ENCODE measurements at regions of chr3 and their contacts with region 1.

Region 1: GRCh38 chr3:177426878-177427495 is 229.7 kb upstream of the TBL1XR1 start:
- DNase-seq: peak; percentile 65
- H3K4me3 Mint-ChIP-seq: peak overlapping the region; percentile 20
- H3K27ac Mint-ChIP-seq: peak overlapping the region; percentile 59
- H3K4me1 Mint-ChIP-seq: peaks cover 29% of the 10 kb centered on the region
- H3K27me3 Mint-ChIP-seq: peaks cover 16% of the 10 kb centered on the region

Region 2: GRCh38 chr3:177057768-177058167 is 369.2 kb before region 1 on chr3:
- intact Hi-C with region 1: loop called (anchors 1 kb)
- DNase-seq: peak; percentile 10
- H3K4me3 Mint-ChIP-seq: no peak overlapping the region
- H3K27ac Mint-ChIP-seq: no peak overlapping the region
- H3K4me1 Mint-ChIP-seq: peaks cover 7% of the 10 kb centered on the region
- H3K27me3 Mint-ChIP-seq: no peaks in the 10 kb centered on the region

Region 3: GRCh38 chr3:177314897-177315296 is 112.1 kb before region 1 on chr3:
- intact Hi-C with region 1: loop called (anchors 1 kb)
- DNase-seq: no peak
- H3K4me3 Mint-ChIP-seq: no peak overlapping the region
- H3K27ac Mint-ChIP-seq: no peak overlapping the region
- H3K4me1 Mint-ChIP-seq: peaks cover 15% of the 10 kb centered on the region
- H3K27me3 Mint-ChIP-seq: peaks cover 3% of the 10 kb centered on the region

Region 4: GRCh38 chr3:177345049-177345972 is 81.7 kb before region 1 on chr3:
- intact Hi-C with region 1: loop called (anchors 1 kb)
- DNase-seq: peak; percentile 68
- H3K4me3 Mint-ChIP-seq: peak overlapping the region; percentile 17
- H3K27ac Mint-ChIP-seq: peak overlapping the region; percentile 95
- H3K4me1 Mint-ChIP-seq: peaks cover 46% of the 10 kb centered on the region
- H3K27me3 Mint-ChIP-seq: no peaks in the 10 kb centered on the region

Region 5: GRCh38 chr3:177994976-177995375 is 568.0 kb after region 1 on chr3:
- intact Hi-C with region 1: loop called (anchors 2 kb)
- DNase-seq: no peak
- H3K4me3 Mint-ChIP-seq: no peak overlapping the region
- H3K27ac Mint-ChIP-seq: peak overlapping the region; percentile 75
- H3K4me1 Mint-ChIP-seq: peaks cover 21% of the 10 kb centered on the region
- H3K27me3 Mint-ChIP-seq: no peaks in the 10 kb centered on the region